CD4-positive, alpha-beta T cell (primary cell): ENCODE measurements at regions of chr1 and their contacts with region 1.

Region 1: GRCh38 chr1:6794164-6794563 is 8.9 kb downstream of the CAMTA1 start:
- DNase-seq: peak in 3 of 14 experiments; percentile 55 to 56 (median 56)
- ATAC-seq: no peak
- H3K4me3 ChIP-seq: no peak overlapping the region
- H3K4me3 Mint-ChIP-seq: no peak overlapping the region
- H3K27ac ChIP-seq: no peak overlapping the region
- H3K27ac Mint-ChIP-seq: no peak overlapping the region
- H3K4me1 ChIP-seq: peaks cover 4% of the 10 kb centered on the region
- H3K4me1 Mint-ChIP-seq: peaks cover 50% of the 10 kb centered on the region
- H3K27me3 ChIP-seq: no peaks in the 10 kb centered on the region
- H3K27me3 Mint-ChIP-seq: no peaks in the 10 kb centered on the region
- CTCF ChIP-seq: no peak

Region 2: DNA sequence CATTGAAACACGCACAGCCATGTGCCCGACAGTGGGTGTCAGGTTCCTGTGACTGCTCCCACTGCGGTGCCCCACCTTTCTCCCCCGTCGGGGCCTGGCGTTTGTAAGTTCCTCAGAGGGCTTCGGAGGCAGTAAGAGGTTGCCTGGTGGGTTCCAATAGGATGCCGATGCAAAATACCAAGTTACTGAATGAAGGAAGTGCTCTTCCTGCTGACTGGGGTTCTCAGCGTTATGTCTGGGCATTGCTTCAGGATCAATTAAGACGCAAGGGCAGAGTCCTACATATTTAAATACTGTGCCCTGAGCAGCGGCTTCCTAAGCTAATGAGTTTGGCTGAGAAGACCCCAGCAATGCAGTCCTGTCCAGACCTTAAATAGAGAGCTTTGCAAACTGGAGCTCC is 63.7 kb before region 1 on chr1:
- CTCF ChIA-PET with region 1: no interaction called
- POLR2A ChIA-PET with region 1: no interaction called
- intact Hi-C with region 1: no loop called
- DNase-seq: no peak
- ATAC-seq: no peak
- H3K4me3 ChIP-seq: no peak overlapping the region
- H3K4me3 Mint-ChIP-seq: no peak overlapping the region
- H3K27ac ChIP-seq: no peak overlapping the region
- H3K27ac Mint-ChIP-seq: no peak overlapping the region
- H3K4me1 ChIP-seq: no peaks in the 10 kb centered on the region
- H3K4me1 Mint-ChIP-seq: peaks cover 10% of the 10 kb centered on the region
- H3K27me3 ChIP-seq: peaks cover 0 to 3% of the 10 kb centered on the region in 2 experiments
- H3K27me3 Mint-ChIP-seq: peaks cover 16% of the 10 kb centered on the region
- CTCF ChIP-seq: no peak

Region 3: GRCh38 chr1:6776895-6777294 is 17.3 kb before region 1 on chr1:
- CTCF ChIA-PET with region 1: no interaction called
- POLR2A ChIA-PET with region 1: no interaction called
- intact Hi-C with region 1: no loop called
- DNase-seq: no peak
- ATAC-seq: no peak
- H3K4me3 ChIP-seq: no peak overlapping the region
- H3K4me3 Mint-ChIP-seq: no peak overlapping the region
- H3K27ac ChIP-seq: no peak overlapping the region
- H3K27ac Mint-ChIP-seq: no peak overlapping the region
- H3K4me1 ChIP-seq: no peaks in the 10 kb centered on the region
- H3K4me1 Mint-ChIP-seq: no peaks in the 10 kb centered on the region
- H3K27me3 ChIP-seq: peaks cover 0 to 6% of the 10 kb centered on the region in 2 experiments
- H3K27me3 Mint-ChIP-seq: peaks cover 8% of the 10 kb centered on the region
- CTCF ChIP-seq: no peak

Region 4: GRCh38 chr1:6889875-6890480 is 95.8 kb after region 1 on chr1:
- CTCF ChIA-PET with region 1: no interaction called
- POLR2A ChIA-PET with region 1: no interaction called
- intact Hi-C with region 1: loop called (anchors 1 kb)
- DNase-seq: peak in 13 of 14 experiments; percentile 2 to 62 (median 17)
- ATAC-seq: no peak
- H3K4me3 ChIP-seq: no peak overlapping the region
- H3K4me3 Mint-ChIP-seq: no peak overlapping the region
- H3K27ac ChIP-seq: no peak overlapping the region
- H3K27ac Mint-ChIP-seq: no peak overlapping the region
- H3K4me1 ChIP-seq: no peaks in the 10 kb centered on the region
- H3K4me1 Mint-ChIP-seq: no peaks in the 10 kb centered on the region
- H3K27me3 ChIP-seq: no peaks in the 10 kb centered on the region
- H3K27me3 Mint-ChIP-seq: no peaks in the 10 kb centered on the region
- CTCF ChIP-seq: peak; percentile 69

Region 5: GRCh38 chr1:7070389-7071029 is 276.3 kb after region 1 on chr1:
- CTCF ChIA-PET with region 1: no interaction called
- POLR2A ChIA-PET with region 1: no interaction called
- intact Hi-C with region 1: loop called (anchors 1 kb)
- DNase-seq: peak; percentile 14 to 69 (median 32)
- ATAC-seq: no peak
- H3K4me3 ChIP-seq: no peak overlapping the region
- H3K4me3 Mint-ChIP-seq: no peak overlapping the region
- H3K27ac ChIP-seq: no peak overlapping the region
- H3K27ac Mint-ChIP-seq: no peak overlapping the region
- H3K4me1 ChIP-seq: peaks cover 6% of the 10 kb centered on the region
- H3K4me1 Mint-ChIP-seq: peaks cover 7% of the 10 kb centered on the region
- H3K27me3 ChIP-seq: peaks cover 2 to 21% of the 10 kb centered on the region in 2 experiments
- H3K27me3 Mint-ChIP-seq: peaks cover 45% of the 10 kb centered on the region
- CTCF ChIP-seq: peak; percentile 79

Region 6: DNA sequence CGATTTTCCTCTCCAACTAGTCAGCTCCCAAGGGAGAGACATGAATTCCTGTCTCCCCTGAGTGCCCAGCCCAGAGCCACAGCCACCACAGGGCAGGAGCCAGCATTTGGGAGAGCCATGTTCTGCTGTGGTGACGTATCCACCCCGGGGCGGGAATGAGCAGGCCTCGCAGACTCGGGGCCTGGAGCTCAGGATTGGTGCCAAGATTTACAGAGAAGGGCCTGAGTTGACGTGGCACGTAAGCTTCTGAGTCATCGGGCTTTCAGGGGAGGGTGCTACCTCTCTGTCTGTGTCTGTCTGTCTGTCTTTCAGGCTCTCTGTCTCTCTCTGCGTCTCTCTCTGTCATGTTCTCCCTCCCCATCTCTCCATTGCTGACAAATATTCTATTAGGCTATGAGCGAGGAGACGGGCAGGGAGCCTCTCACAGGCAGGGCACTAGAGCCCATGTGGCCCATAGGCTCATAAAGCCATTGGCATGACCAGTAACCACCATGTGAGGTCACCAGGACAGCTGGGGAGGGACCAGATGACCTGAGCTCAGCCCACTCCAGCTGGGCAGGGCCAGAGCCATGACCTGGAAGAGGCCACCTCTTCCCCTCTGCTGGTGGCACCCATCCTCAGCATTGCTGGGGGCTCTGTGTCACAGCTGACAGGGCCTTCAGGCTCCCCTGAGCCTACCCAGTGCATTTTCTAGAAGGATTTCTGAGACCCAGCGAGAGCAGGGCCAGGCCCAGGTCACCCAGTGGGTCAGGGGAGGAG is 676.9 kb after region 1 on chr1:
- CTCF ChIA-PET with region 1: no interaction called
- POLR2A ChIA-PET with region 1: no interaction called
- intact Hi-C with region 1: no loop called
- DNase-seq: no peak
- ATAC-seq: no peak
- H3K4me3 ChIP-seq: no peak overlapping the region
- H3K4me3 Mint-ChIP-seq: no peak overlapping the region
- H3K27ac ChIP-seq: no peak overlapping the region
- H3K27ac Mint-ChIP-seq: no peak overlapping the region
- H3K4me1 ChIP-seq: no peaks in the 10 kb centered on the region
- H3K4me1 Mint-ChIP-seq: no peaks in the 10 kb centered on the region
- H3K27me3 ChIP-seq: no peaks in the 10 kb centered on the region
- H3K27me3 Mint-ChIP-seq: no peaks in the 10 kb centered on the region
- CTCF ChIP-seq: no peak

Region 7: DNA sequence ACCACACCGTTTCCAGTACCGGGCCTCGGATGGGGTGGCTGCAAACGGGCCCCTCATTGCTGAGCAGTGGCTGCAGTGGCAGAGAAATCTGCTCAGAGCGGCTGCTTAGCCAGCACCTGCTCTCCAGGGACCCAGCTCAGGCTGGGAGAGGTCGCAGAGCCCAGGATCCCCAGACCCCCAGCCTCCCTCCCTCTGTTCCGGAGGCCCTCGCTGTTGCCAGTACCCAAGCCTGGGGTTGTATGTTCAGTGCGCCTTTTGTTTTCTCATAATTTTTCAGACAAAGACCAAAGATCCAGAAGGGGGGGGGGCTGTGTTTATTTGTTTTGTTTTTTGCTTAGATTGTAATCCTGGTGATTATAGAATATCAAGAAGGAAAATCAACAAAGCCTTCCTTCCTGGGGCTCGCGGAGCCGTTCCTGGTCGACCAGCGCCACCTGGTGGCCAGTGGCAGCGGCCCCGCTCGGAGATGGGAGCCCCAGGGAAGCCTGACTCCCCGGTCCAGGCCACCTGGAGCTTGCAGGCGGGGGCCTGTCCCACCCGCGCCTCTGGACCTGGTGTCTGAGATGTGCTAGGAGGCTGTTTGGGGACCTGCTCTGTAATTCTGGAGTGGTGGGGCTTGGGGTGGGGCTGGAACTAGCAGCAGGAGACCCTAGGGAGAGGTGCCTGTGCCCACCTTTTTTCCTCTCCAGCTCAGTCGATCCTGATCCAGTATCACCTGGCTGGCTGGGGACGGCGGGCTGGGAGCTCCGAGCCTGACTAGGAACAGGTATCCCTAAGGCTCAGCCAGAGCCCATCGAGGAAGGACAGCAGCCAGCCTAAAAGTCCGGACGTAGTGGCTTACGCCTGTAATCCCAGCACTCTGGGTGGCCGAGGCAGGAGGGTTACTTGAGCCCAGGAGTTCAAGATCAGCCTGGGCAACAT is 853.1 kb after region 1 on chr1:
- CTCF ChIA-PET with region 1: no interaction called
- POLR2A ChIA-PET with region 1: no interaction called
- intact Hi-C with region 1: loop called in 1 of 2 experiments (anchors 5 kb)
- DNase-seq: peak; percentile 38 to 76 (median 62)
- ATAC-seq: peak; percentile 59
- H3K4me3 ChIP-seq: no peak overlapping the region
- H3K4me3 Mint-ChIP-seq: no peak overlapping the region
- H3K27ac ChIP-seq: no peak overlapping the region
- H3K27ac Mint-ChIP-seq: no peak overlapping the region
- H3K4me1 ChIP-seq: peaks cover 8% of the 10 kb centered on the region
- H3K4me1 Mint-ChIP-seq: no peaks in the 10 kb centered on the region
- H3K27me3 ChIP-seq: no peaks in the 10 kb centered on the region
- H3K27me3 Mint-ChIP-seq: no peaks in the 10 kb centered on the region
- CTCF ChIP-seq: peak; percentile 89